ENCODE measurements at regions of chr1 and their contacts with region 1.

Region 1: DNA sequence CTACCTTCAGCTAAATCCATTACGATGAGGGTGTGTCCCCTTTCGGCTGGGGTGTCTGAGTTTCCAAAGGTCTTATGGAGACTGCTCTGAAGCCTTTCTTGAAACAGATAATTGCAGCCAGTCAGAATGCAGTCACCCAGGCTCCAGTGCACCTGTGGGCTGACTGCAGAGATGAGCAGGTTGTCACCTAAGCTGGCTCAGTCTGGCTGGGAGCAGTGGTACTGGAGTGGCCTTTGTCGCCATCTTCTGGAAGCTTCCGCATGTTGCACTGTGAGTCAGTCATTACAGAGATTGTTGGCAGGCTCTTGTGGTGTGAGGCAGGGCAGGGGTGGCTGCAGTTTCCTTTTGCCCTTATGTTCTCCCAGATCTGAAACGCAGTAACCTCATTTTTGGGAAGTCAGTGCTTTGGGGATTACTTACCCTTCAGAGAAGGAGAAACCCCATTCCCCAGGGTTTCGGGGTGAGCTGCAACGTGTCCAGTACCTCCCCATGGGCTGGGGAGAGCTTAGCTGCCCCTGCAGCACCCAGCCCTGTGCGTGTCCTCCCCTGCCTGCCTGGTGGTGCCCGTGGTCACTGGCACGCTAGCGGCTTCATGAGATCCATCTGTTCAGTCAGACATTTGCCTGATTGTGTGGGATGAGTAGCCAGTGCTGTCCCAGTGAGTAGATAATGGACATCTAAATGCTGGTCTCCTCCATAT is 48.0 kb downstream of the SMYD2 start:
- DNase-seq: no peak
- H3K4me3 ChIP-seq: no peak overlapping the region
- H3K27me3 ChIP-seq: no peaks in the 10 kb centered on the region
- CTCF ChIP-seq: peak; percentile 87

Region 2: DNA sequence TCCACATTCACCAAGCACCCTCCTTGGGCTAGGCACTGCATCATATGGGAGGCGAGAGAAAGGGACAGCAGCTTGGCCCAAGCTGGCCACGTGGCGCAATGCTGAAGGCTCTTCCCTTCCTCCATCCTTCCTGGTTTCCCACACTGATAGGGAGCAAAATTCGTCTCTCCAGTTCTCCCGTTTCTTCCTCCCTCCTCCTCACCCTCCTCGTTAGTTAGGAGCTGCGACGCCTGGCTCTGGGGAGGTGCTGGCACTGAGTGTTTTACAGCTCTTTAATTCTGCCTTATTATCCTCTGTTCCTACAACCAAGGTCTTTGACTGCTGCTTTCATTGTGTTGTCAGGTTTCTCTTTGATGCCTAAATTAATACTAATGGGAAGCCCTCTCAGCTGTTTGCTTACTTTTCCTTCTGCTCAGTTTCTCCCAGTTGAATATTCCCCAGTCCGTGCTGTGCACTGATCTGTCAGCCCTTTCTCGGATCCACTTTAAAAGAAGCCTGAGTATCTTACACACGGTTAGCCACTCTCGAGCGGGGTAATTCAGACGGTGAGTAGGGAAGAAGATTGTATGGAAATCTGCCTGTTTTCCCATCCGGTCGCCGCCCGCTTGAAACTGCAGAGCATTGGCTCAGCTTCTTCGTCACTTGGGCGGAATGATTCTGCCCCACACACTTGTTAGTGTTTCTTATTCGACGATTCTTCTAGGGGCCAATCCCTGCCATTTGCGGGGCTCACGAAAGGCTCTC is 104.1 kb before region 1 on chr1:
- CTCF ChIA-PET with region 1: interaction called, 38 read pairs
- POLR2A ChIA-PET with region 1: no interaction called
- DNase-seq: no peak
- H3K4me3 ChIP-seq: peak overlapping the region; percentile 33
- H3K27me3 ChIP-seq: peaks cover 6% of the 10 kb centered on the region
- CTCF ChIP-seq: no peak

Region 3: DNA sequence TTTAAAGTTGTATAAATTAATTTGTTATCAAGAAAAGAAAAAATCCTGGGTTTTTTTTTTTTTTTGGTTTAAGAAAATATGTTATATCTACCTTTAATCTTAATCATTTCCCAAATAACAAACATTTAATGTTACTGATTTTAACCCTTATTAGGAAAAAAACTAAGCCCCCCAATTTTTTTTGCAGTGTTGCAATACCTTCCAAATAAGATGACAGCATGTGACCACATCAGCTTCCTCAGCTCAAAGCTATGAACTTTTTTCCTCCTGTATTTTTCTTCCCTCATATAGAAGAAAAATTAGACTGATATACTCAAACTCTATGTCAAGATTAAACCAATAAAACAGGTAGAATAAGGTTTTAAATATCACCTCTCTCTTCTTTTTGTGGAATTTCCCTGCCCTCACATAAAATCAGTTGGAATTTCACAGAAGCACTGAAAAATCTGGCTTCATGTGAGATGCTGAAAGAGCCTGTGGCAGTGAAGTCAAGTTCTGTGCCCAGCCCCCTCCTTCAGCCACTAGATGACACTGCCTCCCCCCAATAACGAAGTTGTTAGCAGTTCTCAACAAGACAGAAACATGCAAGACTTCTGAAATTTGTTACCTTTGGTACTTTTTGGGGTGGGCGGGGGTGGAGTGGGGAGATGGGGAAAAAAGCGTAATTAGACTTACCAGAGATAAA is 57.6 kb before region 1 on chr1:
- CTCF ChIA-PET with region 1: interaction called, 29 read pairs
- POLR2A ChIA-PET with region 1: interaction called, 3 read pairs
- DNase-seq: no peak
- H3K4me3 ChIP-seq: no peak overlapping the region
- H3K27me3 ChIP-seq: peaks cover 5% of the 10 kb centered on the region
- CTCF ChIP-seq: no peak

Region 4: DNA sequence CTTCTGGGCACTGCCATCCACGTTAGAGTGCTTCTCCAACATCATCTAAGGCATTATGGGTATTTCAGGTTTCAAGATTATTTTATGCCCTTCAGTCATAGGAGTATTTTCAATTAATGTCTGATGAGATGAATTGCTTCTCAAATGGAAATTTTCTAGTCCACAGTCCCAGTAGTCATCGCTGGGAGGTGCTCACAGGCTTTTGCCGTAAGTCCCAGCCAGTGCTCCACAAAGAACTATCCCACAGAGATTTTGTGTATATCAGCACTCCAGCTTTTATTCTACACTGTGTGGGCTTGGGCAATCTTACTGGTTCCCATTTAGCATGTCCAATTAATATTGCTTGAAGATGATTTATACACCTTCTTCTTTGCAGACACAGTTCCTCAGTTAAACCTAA is 13.0 kb after region 1 on chr1:
- CTCF ChIA-PET with region 1: interaction called, 20 read pairs
- POLR2A ChIA-PET with region 1: no interaction called
- DNase-seq: no peak
- H3K4me3 ChIP-seq: no peak overlapping the region
- H3K27me3 ChIP-seq: no peaks in the 10 kb centered on the region
- CTCF ChIP-seq: no peak

Region 5: DNA sequence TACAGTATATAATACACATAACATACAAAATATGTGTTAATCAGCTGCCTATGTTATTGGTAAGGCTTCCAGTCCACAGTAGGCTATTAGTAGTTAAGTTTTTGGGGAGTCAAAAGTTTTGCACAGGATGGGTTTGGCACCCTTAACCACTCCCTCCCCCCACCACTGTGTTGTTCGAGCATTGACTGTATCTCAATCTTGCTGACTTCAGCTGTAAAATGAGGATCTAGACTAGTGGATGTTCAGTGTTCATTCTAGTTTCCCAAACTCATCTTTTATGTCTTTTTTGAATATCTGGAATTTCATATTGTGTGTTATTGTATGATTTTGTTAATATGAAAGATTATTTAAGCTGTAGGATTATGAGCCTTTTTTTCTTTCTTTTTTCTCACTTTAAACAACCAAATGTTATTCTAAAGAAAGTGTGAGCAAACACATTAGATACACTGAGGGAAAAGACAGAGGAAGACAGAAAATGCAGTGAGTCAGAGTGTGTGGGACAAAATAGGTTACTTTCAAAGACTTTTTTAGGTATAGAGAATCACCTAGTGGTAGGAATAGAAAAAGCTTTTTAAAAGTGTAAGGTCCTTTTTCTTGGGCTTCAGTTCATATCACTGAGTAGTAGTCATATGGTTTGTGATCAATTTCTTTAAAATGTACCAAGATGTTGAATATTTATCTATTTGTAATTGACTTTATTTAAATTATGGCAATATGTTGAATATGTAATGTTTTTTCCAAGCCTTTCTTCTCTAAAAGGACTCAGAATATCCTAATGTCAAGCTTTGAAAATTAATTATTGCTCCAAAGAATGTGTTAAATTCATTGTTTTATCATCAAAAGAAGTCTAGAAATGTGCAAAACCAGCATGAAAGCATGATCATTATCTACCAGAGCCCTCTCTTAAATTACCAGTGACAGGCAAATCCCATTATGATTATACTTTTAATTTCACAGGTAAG is 256.2 kb after region 1 on chr1:
- CTCF ChIA-PET with region 1: interaction called, 473 read pairs
- POLR2A ChIA-PET with region 1: no interaction called
- DNase-seq: no peak
- H3K4me3 ChIP-seq: no peak overlapping the region
- H3K27me3 ChIP-seq: no peaks in the 10 kb centered on the region
- CTCF ChIP-seq: peak; percentile 75